Activated CD8-positive, alpha-beta T cell treated with anti-CD3 and anti-CD28 coated beads, Interleukin-2, amount 10 ng/mL, durations not matched to agents 7 days and 5 days (primary cell): ENCODE measurements at regions of chr6 and their contacts with region 1.

Region 1: GRCh38 chr6:106512048-106512967 is 117.0 kb downstream of the RTN4IP1 start:
- DNase-seq: peak; percentile 89
- ATAC-seq: peak; percentile 72
- H3K4me3 Mint-ChIP-seq: peak overlapping the region; percentile 81
- H3K27ac Mint-ChIP-seq: peak overlapping the region; percentile 95
- H3K4me1 Mint-ChIP-seq: peaks cover 64% of the 10 kb centered on the region
- H3K27me3 Mint-ChIP-seq: peaks cover 2% of the 10 kb centered on the region

Region 2: DNA sequence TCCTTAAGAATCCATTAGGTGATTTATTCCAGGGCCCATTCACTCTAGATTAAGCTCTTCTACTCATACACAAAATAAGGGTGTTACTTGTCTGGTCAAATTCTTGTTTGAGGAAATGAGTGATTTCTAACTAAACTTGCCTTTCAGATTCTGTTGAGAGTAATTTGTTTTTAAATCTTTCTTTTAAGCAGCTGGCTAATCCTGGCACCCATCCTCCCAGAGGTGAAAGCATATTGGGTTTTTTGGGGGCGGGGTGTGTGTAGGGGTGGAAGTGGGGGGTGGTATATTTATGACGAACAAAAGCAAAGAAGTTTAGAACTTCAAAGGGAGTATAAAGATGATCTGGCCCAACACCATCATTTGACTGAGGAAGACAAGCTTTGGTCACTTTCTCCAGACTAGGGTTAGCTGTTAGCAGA is 22.3 kb after region 1 on chr6:
- CTCF ChIA-PET with region 1: interaction called, 35 read pairs
- POLR2A ChIA-PET with region 1: interaction called, 25 read pairs
- DNase-seq: no peak
- ATAC-seq: no peak
- H3K4me3 Mint-ChIP-seq: no peak overlapping the region
- H3K27ac Mint-ChIP-seq: peak overlapping the region; percentile 58
- H3K4me1 Mint-ChIP-seq: peaks cover 61% of the 10 kb centered on the region
- H3K27me3 Mint-ChIP-seq: no peaks in the 10 kb centered on the region

Region 3: DNA sequence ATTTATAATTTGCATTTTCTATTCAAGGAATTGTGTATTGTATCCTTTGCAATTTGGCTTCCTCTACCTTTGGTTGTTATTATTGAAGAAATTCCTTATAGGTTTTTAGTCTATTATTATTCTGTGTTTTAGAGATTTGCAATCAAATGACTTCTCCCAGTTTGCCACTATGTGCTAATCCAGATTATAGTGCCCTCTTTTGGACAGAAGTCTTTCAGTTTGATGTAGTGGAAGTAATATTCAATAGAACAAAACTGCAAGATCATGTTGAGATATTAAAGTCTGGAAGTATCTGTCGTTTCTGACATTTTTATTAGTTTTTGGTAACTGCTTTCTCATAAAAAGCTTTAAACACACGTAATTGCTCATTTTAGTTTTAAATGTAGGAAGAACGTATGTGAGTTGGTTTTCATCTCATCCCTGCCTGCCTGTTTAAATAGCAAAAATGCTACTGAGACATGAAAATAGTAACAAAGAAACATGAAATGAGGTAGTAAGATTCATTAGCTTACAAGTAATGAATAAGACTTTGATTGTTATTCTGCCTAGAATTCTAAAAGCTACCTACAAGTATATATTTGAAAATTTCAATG is 44.2 kb after region 1 on chr6:
- CTCF ChIA-PET with region 1: interaction called, 127 read pairs
- POLR2A ChIA-PET with region 1: interaction called, 3 read pairs
- DNase-seq: no peak
- ATAC-seq: no peak
- H3K4me3 Mint-ChIP-seq: no peak overlapping the region
- H3K27ac Mint-ChIP-seq: no peak overlapping the region
- H3K4me1 Mint-ChIP-seq: peaks cover 4% of the 10 kb centered on the region
- H3K27me3 Mint-ChIP-seq: no peaks in the 10 kb centered on the region